Sigmoid colon (tissue), 7 donors: ENCODE measurements at regions of chrX and their contacts with region 1.

Region 1: GRCh38 chrX:43557792-43558191 is 98.3 kb upstream of the MAOA start:
- DNase-seq: peak; percentile 68
- H3K4me3 ChIP-seq: no peak overlapping the region
- H3K27ac ChIP-seq: no peak overlapping the region
- H3K4me1 ChIP-seq: no peaks in the 10 kb centered on the region
- H3K27me3 ChIP-seq: no peaks in the 10 kb centered on the region
- CTCF ChIP-seq: peak in 3 of 4 experiments; percentile 31 to 50 (median 34)
- EP300 ChIP-seq: no peak
- POLR2A ChIP-seq: no peak

Region 2: DNA sequence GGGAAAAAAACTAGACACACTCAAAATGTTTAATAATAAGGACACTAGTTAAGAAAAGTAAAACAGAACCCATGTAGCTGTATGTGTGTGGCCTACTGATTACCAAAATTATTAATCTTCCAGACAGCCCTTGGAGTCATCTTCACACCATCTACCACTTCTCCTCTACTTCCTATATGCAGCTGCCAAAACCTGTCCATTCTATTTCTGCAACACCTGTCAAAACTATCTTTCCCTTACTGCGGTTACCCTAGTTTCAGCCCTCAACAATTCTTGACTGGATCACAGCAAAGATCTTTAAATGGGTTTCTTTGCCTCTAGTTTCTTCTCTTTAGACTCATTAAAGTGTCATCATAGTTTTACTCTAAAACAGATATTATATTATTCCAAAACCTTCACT is 1761.2 kb before region 1 on chrX:
- intact Hi-C with region 1: loop called (anchors 5 kb)
- DNase-seq: no peak
- H3K4me3 ChIP-seq: no peak overlapping the region
- H3K27ac ChIP-seq: no peak overlapping the region
- H3K4me1 ChIP-seq: peaks cover 0 to 7% (median 0%) of the 10 kb centered on the region in 4 donors
- H3K27me3 ChIP-seq: no peaks in the 10 kb centered on the region
- CTCF ChIP-seq: no peak
- EP300 ChIP-seq: no peak
- POLR2A ChIP-seq: no peak

Region 3: DNA sequence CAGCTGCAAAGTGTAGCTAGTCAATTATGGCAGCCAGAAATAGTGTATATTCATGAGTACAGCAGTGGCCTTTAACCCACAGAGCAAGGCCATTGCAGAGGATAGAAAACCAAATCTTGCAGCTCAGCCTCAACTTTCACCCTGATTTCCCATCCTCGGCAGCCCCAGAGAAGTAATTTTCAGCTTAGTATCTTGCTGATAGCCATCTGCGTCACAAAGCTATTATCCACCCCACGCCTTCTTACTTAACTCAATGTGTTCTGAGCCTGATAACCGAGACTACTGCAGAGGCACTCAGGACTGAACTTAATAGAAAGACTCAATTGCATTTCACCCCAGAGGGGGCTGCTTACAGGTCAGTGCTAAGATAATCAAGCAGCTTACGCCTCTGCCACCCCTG is 76.2 kb before region 1 on chrX:
- intact Hi-C with region 1: no loop called
- DNase-seq: no peak
- H3K4me3 ChIP-seq: no peak overlapping the region
- H3K27ac ChIP-seq: no peak overlapping the region
- H3K4me1 ChIP-seq: no peaks in the 10 kb centered on the region
- H3K27me3 ChIP-seq: no peaks in the 10 kb centered on the region
- CTCF ChIP-seq: no peak
- EP300 ChIP-seq: no peak
- POLR2A ChIP-seq: no peak

Region 4: GRCh38 chrX:43750248-43750676 is 192.5 kb after region 1 on chrX:
- intact Hi-C with region 1: loop called (anchors 1 kb)
- DNase-seq: peak; percentile 76
- H3K4me3 ChIP-seq: no peak overlapping the region
- H3K27ac ChIP-seq: no peak overlapping the region
- H3K4me1 ChIP-seq: peaks cover 0 to 11% (median 0%) of the 10 kb centered on the region in 4 donors
- H3K27me3 ChIP-seq: no peaks in the 10 kb centered on the region
- CTCF ChIP-seq: peak; percentile 32 to 51 (median 46)
- EP300 ChIP-seq: no peak
- POLR2A ChIP-seq: no peak

Region 5: DNA sequence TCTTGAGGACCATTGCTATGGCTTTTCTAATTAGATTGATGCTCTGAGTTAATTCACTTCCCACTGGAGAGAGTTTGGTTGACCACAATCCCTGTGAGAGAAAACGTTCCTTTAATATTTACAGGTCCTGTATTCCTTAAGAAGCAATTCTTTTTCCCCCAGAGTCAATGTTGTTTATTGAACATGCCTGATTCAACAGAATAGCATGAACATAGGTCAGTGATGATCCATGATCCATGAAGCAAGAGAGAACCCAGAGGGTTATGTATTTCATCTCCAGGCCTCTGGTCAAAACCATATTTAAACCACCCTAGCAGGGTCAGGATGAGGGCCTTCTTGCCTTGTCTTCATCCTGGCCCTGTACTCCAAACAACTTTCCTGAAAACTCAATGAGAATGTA is 825.1 kb after region 1 on chrX:
- intact Hi-C with region 1: no loop called
- DNase-seq: no peak
- H3K4me3 ChIP-seq: no peak overlapping the region
- H3K27ac ChIP-seq: no peak overlapping the region
- H3K4me1 ChIP-seq: no peaks in the 10 kb centered on the region
- H3K27me3 ChIP-seq: no peaks in the 10 kb centered on the region
- CTCF ChIP-seq: no peak
- EP300 ChIP-seq: no peak
- POLR2A ChIP-seq: no peak